CD8-positive, alpha-beta memory T cell (primary cell): ENCODE measurements at regions of chr6 and their contacts with region 1.

Region 1: DNA sequence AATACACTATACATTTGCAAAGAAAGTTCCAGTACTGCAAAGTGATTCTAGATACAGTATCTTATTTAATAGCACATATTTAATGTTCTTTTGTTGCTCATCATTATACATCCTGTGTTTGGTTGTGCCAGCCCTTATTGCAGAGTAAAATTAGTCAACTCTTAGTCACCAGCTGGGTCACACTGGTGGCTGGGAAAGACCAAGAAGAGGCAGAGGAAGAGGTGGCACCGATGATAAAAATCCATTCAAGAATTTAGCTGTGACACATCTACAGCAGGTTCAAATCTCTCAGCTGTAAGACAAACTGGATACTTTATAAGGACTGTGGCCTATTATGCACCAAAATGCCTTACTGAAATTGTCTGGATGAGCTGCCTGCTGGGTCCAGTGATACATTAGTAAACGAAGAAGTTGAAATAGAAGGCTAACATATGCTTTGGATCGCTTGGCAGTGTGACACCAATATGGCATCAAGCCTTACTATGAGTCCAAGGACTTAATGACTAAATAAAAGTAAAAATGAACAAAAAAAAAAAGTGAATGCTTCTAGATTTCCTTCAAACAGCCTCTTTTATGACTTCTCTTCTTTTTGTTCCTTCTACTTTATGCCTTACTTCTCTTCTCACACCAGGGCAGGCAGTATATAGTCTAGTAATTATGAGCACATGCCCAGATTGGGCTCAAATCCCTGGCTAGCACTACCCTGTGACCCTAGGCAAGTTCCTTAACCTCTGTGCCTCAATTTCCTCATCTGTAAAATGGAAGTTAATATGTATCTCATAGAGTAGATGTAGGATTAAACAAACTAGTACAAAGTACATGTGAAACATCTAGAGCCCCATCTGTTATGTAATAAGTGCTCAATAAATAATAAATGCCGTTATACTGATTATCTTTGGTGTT is 29.4 kb upstream of the RNF8 start:
- DNase-seq: no peak
- H3K4me3 ChIP-seq: no peak overlapping the region
- H3K4me3 Mint-ChIP-seq: no peak overlapping the region
- H3K27ac ChIP-seq: no peak overlapping the region
- H3K27ac Mint-ChIP-seq: peak overlapping the region in 3 of 8 donors; percentile 50 to 79 (median 69)
- H3K4me1 ChIP-seq: no peaks in the 10 kb centered on the region
- H3K4me1 Mint-ChIP-seq: peaks cover 0 to 2% (median 0%) of the 10 kb centered on the region in 3 donors
- H3K27me3 ChIP-seq: no peaks in the 10 kb centered on the region
- H3K27me3 Mint-ChIP-seq: peaks cover 0 to 2% of the 10 kb centered on the region in 2 donors

Region 2: DNA sequence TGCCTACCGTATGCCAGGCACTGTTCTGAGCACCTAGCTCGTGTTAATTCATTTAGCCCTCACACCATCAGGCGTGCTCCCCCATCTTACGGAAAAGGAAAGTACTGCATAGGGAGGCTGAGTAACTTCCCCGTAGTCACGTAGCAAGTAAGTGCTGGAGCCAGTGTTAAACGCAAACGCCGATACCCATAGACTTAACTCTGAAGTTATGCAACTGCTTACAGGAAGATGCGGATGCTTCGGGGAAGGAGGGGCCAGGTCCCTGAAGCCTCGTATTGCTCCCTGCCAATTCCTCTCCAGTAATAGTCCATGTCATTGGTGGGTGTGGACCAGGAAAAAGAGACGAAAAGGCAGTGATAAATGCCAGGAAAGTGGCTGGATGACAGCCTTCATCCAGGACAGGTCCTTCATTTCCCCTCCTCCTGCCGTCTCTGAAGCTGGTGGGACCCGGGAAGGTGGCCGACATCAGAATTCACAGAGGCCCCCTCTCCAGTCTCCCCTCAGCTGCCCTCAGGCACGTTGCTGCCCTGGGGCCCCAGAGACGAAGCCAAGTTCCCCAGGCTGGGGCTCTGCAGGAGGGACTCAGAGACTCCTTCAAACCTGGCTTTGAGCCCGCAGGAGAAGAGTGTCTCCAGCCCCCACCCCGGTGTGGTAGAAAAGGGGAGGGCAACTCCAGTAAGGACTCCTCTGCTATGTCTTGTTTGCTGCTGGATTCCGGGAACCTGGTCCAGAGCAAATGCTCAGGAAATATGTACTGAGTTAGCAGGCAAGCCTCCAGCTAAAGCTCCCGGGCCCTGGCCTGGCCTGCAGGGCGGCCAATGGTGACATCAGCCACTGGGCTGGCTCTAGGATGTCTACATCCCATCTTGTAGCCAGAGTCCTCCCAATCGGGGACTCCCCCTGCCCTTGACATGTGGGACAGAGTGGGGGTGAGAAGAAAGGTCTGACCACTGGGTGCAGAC is 589.0 kb before region 1 on chr6:
- CTCF ChIA-PET with region 1: no interaction called
- POLR2A ChIA-PET with region 1: no interaction called
- DNase-seq: peak in 1 of 5 donors; percentile 15
- H3K4me3 ChIP-seq: peak overlapping the region; percentile 17
- H3K4me3 Mint-ChIP-seq: peak overlapping the region; percentile 17 to 80 (median 64)
- H3K27ac ChIP-seq: no peak overlapping the region
- H3K27ac Mint-ChIP-seq: peak overlapping the region in 4 of 8 donors; percentile 21 to 80 (median 74)
- H3K4me1 ChIP-seq: peaks cover 5% of the 10 kb centered on the region
- H3K4me1 Mint-ChIP-seq: peaks cover 4 to 7% (median 5%) of the 10 kb centered on the region in 3 donors
- H3K27me3 ChIP-seq: no peaks in the 10 kb centered on the region
- H3K27me3 Mint-ChIP-seq: peaks cover 0 to 3% of the 10 kb centered on the region in 2 donors

Region 3: GRCh38 chr6:37308069-37308815 is 16.1 kb before region 1 on chr6:
- CTCF ChIA-PET with region 1: interaction called, 11 read pairs
- POLR2A ChIA-PET with region 1: no interaction called
- DNase-seq: no peak
- H3K4me3 ChIP-seq: no peak overlapping the region
- H3K4me3 Mint-ChIP-seq: no peak overlapping the region
- H3K27ac ChIP-seq: no peak overlapping the region
- H3K27ac Mint-ChIP-seq: no peak overlapping the region
- H3K4me1 ChIP-seq: no peaks in the 10 kb centered on the region
- H3K4me1 Mint-ChIP-seq: no peaks in the 10 kb centered on the region
- H3K27me3 ChIP-seq: no peaks in the 10 kb centered on the region
- H3K27me3 Mint-ChIP-seq: no peaks in the 10 kb centered on the region

Region 4: GRCh38 chr6:37691904-37692806 is 367.8 kb after region 1 on chr6:
- CTCF ChIA-PET with region 1: interaction called, 33 read pairs
- POLR2A ChIA-PET with region 1: no interaction called
- DNase-seq: peak; percentile 64 to 81 (median 66)
- H3K4me3 ChIP-seq: no peak overlapping the region
- H3K4me3 Mint-ChIP-seq: peak overlapping the region in 2 of 7 donors; percentile 36 to 60
- H3K27ac ChIP-seq: no peak overlapping the region
- H3K27ac Mint-ChIP-seq: peak overlapping the region in 1 of 8 donors; percentile 57
- H3K4me1 ChIP-seq: peaks cover 15% of the 10 kb centered on the region
- H3K4me1 Mint-ChIP-seq: peaks cover 18 to 29% (median 28%) of the 10 kb centered on the region in 3 donors
- H3K27me3 ChIP-seq: peaks cover 39% of the 10 kb centered on the region
- H3K27me3 Mint-ChIP-seq: peaks cover 8 to 28% of the 10 kb centered on the region in 2 donors

Region 5: GRCh38 chr6:38001386-38001785 is 677.0 kb after region 1 on chr6:
- CTCF ChIA-PET with region 1: no interaction called
- POLR2A ChIA-PET with region 1: no interaction called
- DNase-seq: no peak
- H3K4me3 ChIP-seq: no peak overlapping the region
- H3K4me3 Mint-ChIP-seq: no peak overlapping the region
- H3K27ac ChIP-seq: no peak overlapping the region
- H3K27ac Mint-ChIP-seq: no peak overlapping the region
- H3K4me1 ChIP-seq: no peaks in the 10 kb centered on the region
- H3K4me1 Mint-ChIP-seq: peaks cover 25 to 65% (median 52%) of the 10 kb centered on the region in 3 donors
- H3K27me3 ChIP-seq: no peaks in the 10 kb centered on the region
- H3K27me3 Mint-ChIP-seq: no peaks in the 10 kb centered on the region